ENCODE measurements at regions of chr6 and their contacts with region 1.

Region 1: GRCh38 chr6:44096612-44097011 is 30.6 kb downstream of the MRPL14 start:
- DNase-seq: peak; percentile 85
- ATAC-seq: peak; percentile 64

Region 2: DNA sequence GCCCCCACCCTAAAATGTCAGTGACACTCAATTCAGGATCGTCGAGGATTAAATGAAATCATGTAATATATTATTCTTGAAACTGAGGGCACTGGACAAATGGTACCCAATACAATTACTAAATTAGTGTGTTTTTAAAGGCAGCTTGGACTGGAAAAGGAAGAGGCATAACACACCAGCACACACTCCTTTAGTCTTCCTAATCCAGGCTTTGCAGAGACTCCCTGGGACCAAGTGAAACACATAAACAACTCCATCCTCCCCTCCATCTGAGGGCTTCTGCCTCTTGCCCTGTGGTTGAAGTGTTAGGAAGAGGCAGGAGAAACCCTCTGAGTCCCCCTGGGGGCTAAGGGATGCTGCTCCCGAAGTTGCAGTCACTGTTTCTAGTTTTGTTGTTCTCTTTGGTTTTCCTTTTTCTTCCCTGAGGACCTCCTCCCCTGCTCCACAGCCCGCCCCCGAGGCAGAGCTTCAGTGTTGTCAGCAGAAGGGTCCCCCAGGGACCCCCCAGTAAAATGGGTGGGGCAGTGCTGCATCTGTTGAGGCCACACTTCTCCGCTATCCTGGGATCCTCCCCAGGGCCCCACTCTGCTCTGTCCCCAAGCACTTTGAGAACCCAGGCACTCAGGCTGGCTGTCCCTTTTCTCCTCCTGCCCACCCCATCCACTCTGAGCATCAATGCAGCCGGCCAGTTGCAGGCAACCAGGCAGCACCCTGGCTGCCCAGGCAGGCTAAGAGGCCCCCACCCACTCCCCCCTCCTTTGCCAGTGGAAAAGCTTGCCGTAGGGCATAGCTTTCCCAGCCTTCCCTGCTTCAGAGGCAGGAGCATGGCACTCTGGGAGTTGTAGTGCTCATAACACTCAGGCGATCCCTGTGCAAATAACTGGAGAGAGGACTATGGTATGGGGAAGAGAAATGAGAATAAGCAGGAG is 36.7 kb after region 1 on chr6:
- intact Hi-C with region 1: loop called (anchors 5 kb)
- DNase-seq: no peak
- ATAC-seq: peak; percentile 80

Region 3: DNA sequence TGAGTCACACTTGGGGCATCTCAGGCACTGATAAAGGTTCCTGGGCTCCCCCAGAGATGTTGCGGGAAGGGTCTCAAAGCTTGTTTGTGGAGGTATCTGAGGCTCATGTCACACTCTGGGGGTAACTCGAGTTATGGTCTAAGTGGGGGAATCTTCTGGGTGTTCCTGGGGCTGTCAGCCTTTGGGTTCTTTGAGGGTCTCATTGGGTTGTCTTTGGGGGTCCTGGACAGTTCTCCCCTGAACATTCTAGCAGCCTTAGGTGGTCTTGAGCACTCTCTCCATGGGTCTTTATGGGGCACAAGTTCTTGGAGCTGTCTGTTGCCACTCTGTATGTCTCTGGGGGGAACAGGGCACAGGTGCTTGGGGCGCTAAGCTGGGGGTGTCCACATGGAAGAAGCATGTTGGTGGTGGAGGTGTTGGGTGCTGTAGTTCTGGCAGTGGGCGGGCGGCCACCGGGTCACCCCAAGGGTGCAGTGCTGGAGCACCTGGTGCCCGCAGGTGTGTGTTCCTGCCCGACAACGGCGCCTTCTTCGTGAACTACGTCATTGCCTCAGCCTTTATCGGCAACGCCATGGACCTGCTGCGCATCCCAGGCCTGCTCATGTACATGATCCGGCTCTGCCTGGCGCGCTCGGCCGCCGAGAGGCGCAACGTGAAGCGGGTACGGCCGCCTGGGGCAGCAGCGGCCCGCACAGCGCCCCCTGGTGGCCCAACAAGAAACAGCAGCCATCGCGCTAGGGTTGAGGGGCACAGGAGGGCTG is 54.9 kb after region 1 on chr6:
- intact Hi-C with region 1: loop called (anchors 1 kb)
- DNase-seq: peak; percentile 91
- ATAC-seq: peak; percentile 73

Region 4: GRCh38 chr6:44246663-44247337 is 150.2 kb after region 1 on chr6 and contains the start of gene HSP90AB1:
- intact Hi-C with region 1: loop called (anchors 5 kb)
- DNase-seq: peak; percentile 94
- ATAC-seq: peak; percentile 94
- total RNA-seq, gene HSP90AB1: 867 TPM

Region 5: GRCh38 chr6:44338228-44339122 is 241.9 kb after region 1 on chr6:
- intact Hi-C with region 1: loop called (anchors 2 kb)
- DNase-seq: peak; percentile 74
- ATAC-seq: peak; percentile 83

Region 6: DNA sequence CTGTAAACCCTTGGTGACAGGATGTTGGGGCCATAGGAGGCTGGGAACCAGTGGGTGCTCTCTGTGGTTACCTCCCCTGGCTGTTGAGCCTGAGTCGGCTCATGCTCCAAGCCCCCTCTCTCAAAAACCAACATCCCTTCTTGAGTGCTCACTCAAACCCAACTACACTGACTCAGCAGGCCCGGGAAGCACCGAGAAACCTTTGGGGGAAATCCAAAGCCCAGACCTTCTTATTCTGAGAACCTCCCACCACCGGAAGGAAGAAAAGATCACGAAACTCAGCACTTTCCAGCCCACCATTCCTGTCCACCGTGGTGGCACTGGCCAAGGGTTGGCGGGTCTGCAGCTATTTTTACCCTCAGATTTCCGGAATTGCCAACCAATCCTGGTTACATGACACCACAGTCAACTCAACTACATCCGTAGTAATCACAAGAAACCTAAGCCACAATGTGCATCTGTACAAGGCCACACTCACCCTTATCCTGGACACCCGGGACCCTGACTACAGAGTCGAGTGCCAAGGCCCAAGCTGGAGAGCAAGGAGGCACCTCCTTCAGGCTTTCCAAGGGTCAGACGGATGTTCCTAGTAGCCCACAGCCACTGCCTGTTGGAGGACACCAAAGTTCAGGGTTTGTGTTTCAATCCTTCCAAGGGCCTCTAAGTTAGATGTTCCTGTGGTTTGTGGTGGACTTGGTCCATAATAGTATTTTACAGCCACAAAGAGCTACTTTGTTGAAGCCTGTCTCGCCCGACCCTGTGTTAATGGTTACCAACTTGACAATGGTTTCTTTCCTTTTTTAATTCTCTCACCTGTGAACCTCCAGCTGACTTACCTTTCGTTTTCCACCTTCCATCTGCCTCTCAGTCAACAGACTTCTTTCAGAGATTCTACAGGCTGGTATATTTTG is 607.9 kb after region 1 on chr6:
- intact Hi-C with region 1: no loop called
- DNase-seq: no peak
- ATAC-seq: no peak

Measured in Right ventricle myocardium inferior (tissue), 1 donor.